ENCODE measurements at regions of chr16 and their contacts with region 1.

Region 1: DNA sequence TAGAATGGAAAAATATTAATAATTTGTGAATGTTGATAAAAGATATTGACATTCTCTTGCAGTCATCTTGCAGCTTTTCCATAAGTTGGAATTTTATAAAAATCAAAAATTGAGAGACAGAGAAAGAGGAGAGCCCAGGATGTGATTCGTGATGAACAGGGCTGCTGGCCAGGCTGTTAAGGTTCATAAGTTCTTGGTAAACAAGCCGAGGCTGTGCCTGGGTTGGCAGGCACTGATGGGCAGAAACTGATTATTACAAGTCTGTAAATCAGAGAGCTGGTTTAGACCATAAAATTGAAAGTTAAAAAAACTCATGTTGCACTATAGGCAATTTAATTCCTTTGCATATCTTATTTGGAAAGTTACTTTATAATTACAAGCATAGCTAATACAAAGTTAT is 533.7 kb downstream of the HAPSTR1 start:
- DNase-seq: no peak
- H3K4me3 ChIP-seq: no peak overlapping the region
- H3K27ac ChIP-seq: no peak overlapping the region
- H3K4me1 ChIP-seq: no peaks in the 10 kb centered on the region
- H3K27me3 ChIP-seq: no peaks in the 10 kb centered on the region
- CTCF ChIP-seq: no peak
- POLR2A ChIP-seq: no peak

Region 2: DNA sequence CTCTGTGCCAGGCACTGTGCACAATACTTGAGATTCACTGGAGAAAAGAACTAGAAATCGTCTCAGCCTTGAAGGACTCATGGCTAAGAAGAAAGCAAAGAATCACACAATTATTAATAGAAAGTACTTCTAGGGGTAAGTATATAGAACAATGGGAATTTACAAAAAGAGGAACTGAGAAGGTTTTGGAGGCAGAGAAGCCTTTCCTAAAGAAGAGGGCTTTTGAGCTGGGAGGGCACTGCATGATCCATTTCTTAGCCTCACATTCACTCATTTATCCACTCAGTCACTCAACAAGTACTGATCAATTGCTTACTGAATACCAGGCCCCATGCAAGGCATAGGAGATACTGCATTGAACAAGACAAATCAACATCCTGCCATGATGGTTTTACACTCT is 1148.3 kb before region 1 on chr16:
- intact Hi-C with region 1: loop called (anchors 5 kb)
- DNase-seq: no peak
- H3K4me3 ChIP-seq: no peak overlapping the region
- H3K27ac ChIP-seq: no peak overlapping the region
- H3K4me1 ChIP-seq: no peaks in the 10 kb centered on the region
- H3K27me3 ChIP-seq: no peaks in the 10 kb centered on the region
- CTCF ChIP-seq: no peak
- POLR2A ChIP-seq: no peak

Measured in breast epithelium (tissue), 4 donors.